Activated B cell treated with CpG ODN at 0.5 μM for 24 hours (primary cell): ENCODE measurements at regions of chr15 and their contacts with region 1.

Region 1: GRCh38 chr15:70259028-70259424 is 161.3 kb upstream of the TLE3 start:
- DNase-seq: no peak
- ATAC-seq: peak; percentile 40
- H3K4me3 Mint-ChIP-seq: peak overlapping the region; percentile 73
- H3K27ac Mint-ChIP-seq: peak overlapping the region; percentile 53
- H3K4me1 Mint-ChIP-seq: peaks cover 65% of the 10 kb centered on the region
- H3K27me3 Mint-ChIP-seq: no peaks in the 10 kb centered on the region
- CTCF ChIP-seq: no peak

Region 2: GRCh38 chr15:70271422-70272088 is 12.5 kb after region 1 on chr15:
- CTCF ChIA-PET with region 1: interaction called, 11 read pairs
- POLR2A ChIA-PET with region 1: interaction called, 24 read pairs
- intact Hi-C with region 1: no loop called
- DNase-seq: no peak
- ATAC-seq: no peak
- H3K4me3 Mint-ChIP-seq: no peak overlapping the region
- H3K27ac Mint-ChIP-seq: no peak overlapping the region
- H3K4me1 Mint-ChIP-seq: peaks cover 57% of the 10 kb centered on the region
- H3K27me3 Mint-ChIP-seq: peaks cover 3% of the 10 kb centered on the region
- CTCF ChIP-seq: no peak

Region 3: DNA sequence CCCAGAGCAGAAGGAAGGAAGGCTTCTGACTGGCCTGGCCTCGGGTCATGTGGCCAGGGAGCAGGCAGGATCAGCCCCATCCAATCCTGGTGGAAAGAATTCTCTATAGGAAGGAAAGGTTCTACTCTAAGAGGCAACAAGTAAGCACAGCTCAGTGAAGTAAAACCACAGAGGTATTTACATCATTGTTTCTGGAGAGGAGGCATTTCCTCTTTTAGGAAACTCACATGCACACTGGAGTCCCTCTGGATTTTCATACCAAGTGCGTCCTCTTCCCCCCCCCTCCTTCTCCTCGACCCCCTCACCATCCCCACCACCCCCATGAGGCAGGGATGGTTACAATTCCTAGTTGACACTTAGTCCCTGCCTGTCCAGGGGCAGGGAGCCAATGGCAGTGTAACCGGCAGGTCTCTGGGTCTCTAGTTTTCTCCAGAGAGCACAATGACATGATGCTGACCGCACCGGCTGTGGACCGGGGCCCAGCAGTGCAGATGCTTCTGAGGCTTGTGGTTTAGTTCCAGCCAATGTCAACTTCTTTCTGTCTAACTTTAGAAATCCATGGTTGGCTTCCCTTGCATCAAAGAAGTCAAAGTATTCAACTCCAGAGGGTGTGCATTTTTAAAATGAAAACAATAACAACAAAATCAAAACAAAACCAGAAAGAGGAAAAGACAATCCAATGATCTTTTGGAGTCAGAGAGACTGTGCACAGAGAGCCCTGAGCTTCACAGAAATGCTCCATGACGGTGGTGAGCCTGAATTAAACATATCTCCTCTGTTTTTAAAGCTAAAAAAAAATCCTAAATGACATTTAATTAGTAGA is 69.0 kb after region 1 on chr15:
- CTCF ChIA-PET with region 1: no interaction called
- POLR2A ChIA-PET with region 1: no interaction called
- intact Hi-C with region 1: no loop called
- DNase-seq: no peak
- ATAC-seq: peak; percentile 85
- H3K4me3 Mint-ChIP-seq: peak overlapping the region; percentile 63
- H3K27ac Mint-ChIP-seq: peak overlapping the region; percentile 65
- H3K4me1 Mint-ChIP-seq: peaks cover 25% of the 10 kb centered on the region
- H3K27me3 Mint-ChIP-seq: no peaks in the 10 kb centered on the region
- CTCF ChIP-seq: no peak